ENCODE measurements at regions of chr5 and their contacts with region 1.

Region 1: GRCh38 chr5:131423056-131423455 is 159.2 kb downstream of the CDC42SE2 start:
- DNase-seq: no peak
- H3K4me3 Mint-ChIP-seq: no peak overlapping the region
- H3K27ac Mint-ChIP-seq: no peak overlapping the region
- H3K4me1 Mint-ChIP-seq: peaks cover 17% of the 10 kb centered on the region
- H3K27me3 Mint-ChIP-seq: no peaks in the 10 kb centered on the region

Region 2: GRCh38 chr5:131436081-131436480 is 13.0 kb after region 1 on chr5:
- CTCF ChIA-PET with region 1: interaction called, 11 read pairs
- POLR2A ChIA-PET with region 1: no interaction called
- intact Hi-C with region 1: no loop called
- DNase-seq: no peak
- H3K4me3 Mint-ChIP-seq: no peak overlapping the region
- H3K27ac Mint-ChIP-seq: peak overlapping the region; percentile 30
- H3K4me1 Mint-ChIP-seq: peaks cover 2% of the 10 kb centered on the region
- H3K27me3 Mint-ChIP-seq: no peaks in the 10 kb centered on the region